CD14-positive monocyte (primary cell): ENCODE measurements at regions of chr1 and their contacts with region 1.

Region 1: DNA sequence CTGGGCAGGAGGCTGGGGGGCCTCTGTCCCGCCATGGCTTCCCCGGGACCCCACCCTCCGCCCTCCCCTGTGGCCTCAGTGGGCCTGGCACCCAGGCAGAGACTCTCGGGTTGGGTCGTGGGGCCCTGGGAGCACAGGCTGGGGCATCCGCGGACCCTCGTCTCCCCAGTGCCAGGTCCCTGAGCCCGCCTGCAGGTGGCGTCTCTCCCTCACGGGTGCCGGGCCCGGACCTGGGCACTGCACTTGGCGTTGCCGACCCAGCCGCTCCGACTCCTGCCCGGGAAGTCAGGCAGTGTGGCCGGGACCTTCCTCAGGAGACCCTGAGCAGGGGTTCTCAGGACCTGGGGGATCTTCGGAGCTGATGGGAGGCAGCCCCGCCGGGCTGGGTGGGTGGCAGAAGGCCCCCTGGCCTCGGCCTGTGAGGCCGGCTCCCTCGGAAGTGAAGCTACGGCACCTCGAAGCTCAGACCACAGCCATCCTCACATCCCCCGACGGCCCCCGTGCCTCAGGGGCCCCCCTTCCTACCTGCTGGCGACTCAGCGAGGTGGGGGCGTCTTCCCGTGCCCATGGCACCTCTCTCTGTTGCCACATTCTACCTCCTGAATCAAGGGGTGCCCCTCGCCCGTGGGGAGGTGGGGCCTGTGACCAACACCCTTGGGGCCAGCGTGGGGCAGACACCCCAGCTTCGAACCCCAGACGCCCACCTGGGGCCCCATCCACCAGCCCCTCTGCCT is 6.4 kb upstream of the C1orf159 start:
- DNase-seq: peak; percentile 60 to 69 (median 64)
- H3K4me3 ChIP-seq: peak overlapping the region in 2 of 3 experiments; percentile 1 to 63
- H3K4me3 Mint-ChIP-seq: peak overlapping the region; percentile 31 to 71
- H3K27ac ChIP-seq: no peak overlapping the region
- H3K27ac Mint-ChIP-seq: no peak overlapping the region
- H3K4me1 ChIP-seq: peaks cover 5 to 12% of the 10 kb centered on the region in 2 donors
- H3K4me1 Mint-ChIP-seq: peaks cover 4% of the 10 kb centered on the region
- H3K27me3 ChIP-seq: peaks cover 0 to 18% of the 10 kb centered on the region in 2 donors
- H3K27me3 Mint-ChIP-seq: peaks cover 31 to 52% (median 48%) of the 10 kb centered on the region in 3 donors
- CTCF ChIP-seq: peak; percentile 90

Region 2: GRCh38 chr1:1063945-1064831 is 58.1 kb before region 1 on chr1:
- intact Hi-C with region 1: no loop called
- DNase-seq: peak; percentile 86 to 98 (median 90)
- H3K4me3 ChIP-seq: no peak overlapping the region
- H3K4me3 Mint-ChIP-seq: peak overlapping the region in 1 of 2 donors; percentile 31
- H3K27ac ChIP-seq: peak overlapping the region in 1 of 2 donors; percentile 16
- H3K27ac Mint-ChIP-seq: no peak overlapping the region
- H3K4me1 ChIP-seq: peaks cover 25 to 37% of the 10 kb centered on the region in 2 donors
- H3K4me1 Mint-ChIP-seq: peaks cover 17% of the 10 kb centered on the region
- H3K27me3 ChIP-seq: peaks cover 6 to 55% of the 10 kb centered on the region in 2 donors
- H3K27me3 Mint-ChIP-seq: peaks cover 51 to 78% (median 67%) of the 10 kb centered on the region in 3 donors
- CTCF ChIP-seq: peak; percentile 93

Region 3: DNA sequence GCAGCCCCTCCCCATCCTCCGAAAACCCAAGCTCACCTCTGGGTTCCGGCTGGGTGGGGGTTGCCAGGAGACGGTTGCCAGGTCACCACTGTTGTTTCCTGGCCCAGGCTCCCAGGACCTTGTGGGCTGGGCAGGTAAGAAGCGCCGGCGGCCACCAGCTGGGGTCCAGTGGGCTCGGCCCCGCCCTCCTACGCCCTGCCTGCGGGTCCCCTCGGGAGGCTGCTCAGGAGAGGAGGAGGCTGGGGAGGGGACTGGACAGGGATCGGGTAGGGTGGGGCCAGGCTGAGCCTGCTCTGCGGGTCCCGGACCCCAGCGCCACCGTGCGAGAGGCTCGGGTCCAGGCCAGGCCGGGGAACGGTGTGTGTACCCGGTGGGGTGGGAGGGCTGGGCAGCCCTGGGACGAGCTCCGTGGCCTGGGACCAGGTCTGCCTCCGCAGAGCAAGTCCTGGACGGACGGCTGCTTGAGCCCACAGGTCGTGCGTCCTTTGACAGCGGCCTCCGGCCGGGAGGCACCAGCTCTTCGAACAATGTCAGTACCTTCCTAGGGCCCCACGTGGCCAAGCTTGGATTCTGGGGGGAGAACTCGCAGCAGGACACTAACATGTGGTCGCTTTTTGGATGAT is 51.7 kb after region 1 on chr1 and contains the start of gene TTLL10:
- intact Hi-C with region 1: no loop called
- DNase-seq: no peak
- H3K4me3 ChIP-seq: no peak within 1 kb of the TSS
- H3K4me3 Mint-ChIP-seq: peak within 1 kb of the TSS in 1 of 2 donors; percentile 57
- H3K27ac ChIP-seq: no peak within 1 kb of the TSS
- H3K27ac Mint-ChIP-seq: no peak within 1 kb of the TSS
- H3K4me1 ChIP-seq: no peaks in the 10 kb centered on the region
- H3K4me1 Mint-ChIP-seq: no peaks in the 10 kb centered on the region
- H3K27me3 ChIP-seq: peaks cover 4 to 37% of the 10 kb centered on the region in 2 donors
- H3K27me3 Mint-ChIP-seq: peaks cover 33 to 58% (median 41%) of the 10 kb centered on the region in 3 donors
- CTCF ChIP-seq: no peak
- polyA plus RNA-seq, gene TTLL10: 0.06 TPM in 1 of 3 donors, not detected in the others

Region 4: GRCh38 chr1:1291548-1292441 is 169.6 kb after region 1 on chr1:
- intact Hi-C with region 1: loop called in 1 of 2 experiments (anchors 5 kb)
- DNase-seq: peak in 1 of 3 donors; percentile 10
- H3K4me3 ChIP-seq: no peak overlapping the region
- H3K4me3 Mint-ChIP-seq: no peak overlapping the region
- H3K27ac ChIP-seq: no peak overlapping the region
- H3K27ac Mint-ChIP-seq: no peak overlapping the region
- H3K4me1 ChIP-seq: no peaks in the 10 kb centered on the region
- H3K4me1 Mint-ChIP-seq: no peaks in the 10 kb centered on the region
- H3K27me3 ChIP-seq: no peaks in the 10 kb centered on the region
- H3K27me3 Mint-ChIP-seq: peaks cover 0 to 1% (median 0%) of the 10 kb centered on the region in 3 donors
- CTCF ChIP-seq: peak; percentile 54